H1 (cell line): ENCODE measurements at regions of chr16 and their contacts with region 1.

Region 1: DNA sequence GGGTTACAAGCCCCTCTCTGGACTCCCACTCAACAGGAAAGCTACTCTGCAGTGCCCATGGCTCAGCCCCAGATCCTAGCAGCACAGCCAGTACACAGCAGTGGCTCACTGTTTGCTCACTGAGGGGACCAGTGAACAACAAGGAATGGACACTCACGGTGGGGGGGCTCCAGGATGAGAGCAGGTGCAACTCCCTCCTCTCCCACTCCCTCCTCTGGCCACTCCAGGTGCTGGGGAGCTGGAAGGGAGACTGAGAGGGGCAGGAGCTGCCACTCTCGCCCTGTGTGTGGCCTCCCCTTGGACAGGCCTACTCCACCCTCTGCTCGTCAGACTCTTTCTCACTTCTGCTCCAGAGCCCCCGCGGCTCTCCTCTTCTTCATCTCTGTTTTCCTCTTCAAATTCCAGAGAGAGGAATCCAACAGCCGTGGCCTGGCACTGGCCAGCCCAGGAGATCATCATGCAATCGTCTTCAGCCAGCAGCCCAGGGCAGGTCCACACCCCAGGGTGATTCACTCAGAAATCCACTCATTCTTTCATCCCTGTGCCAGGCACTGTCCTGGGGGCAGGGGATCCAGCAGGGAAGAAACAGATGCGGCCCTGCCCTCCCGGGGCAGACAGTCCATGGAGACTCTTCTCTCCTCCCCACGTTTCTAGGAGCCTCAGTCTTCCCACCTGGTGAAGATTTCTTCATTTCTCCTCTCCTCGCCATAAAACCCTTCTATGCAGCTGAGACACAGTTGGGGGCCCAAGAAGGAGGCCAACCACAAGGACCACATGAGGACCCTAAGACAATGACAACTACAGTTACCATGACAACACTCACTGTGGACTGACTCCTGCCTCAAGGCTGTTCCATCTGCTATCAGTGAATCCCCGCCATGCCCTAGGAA is 30.7 kb downstream of the CFAP20 start:
- DNase-seq: no peak
- H3K4me3 ChIP-seq: no peak overlapping the region
- H3K27ac ChIP-seq: no peak overlapping the region
- H3K4me1 ChIP-seq: peaks cover 0 to 6% (median under 1%) of the 10 kb centered on the region in 4 experiments; a peak in 5 of 7 replicates
- H3K27me3 ChIP-seq: no peaks in the 10 kb centered on the region
- CTCF ChIP-seq: no peak
- EP300 ChIP-seq: no peak
- POLR2A ChIP-seq: no peak
- RAD21 ChIP-seq: no peak

Region 2: GRCh38 chr16:58025351-58026138 is 72.9 kb before region 1 on chr16 and contains the start of gene MMP15:
- CTCF ChIA-PET with region 1: interaction called, 37 read pairs
- POLR2A ChIA-PET with region 1: interaction called, 3 read pairs
- DNase-seq: peak; percentile 97 to 98
- H3K4me3 ChIP-seq: peak within 1 kb of the TSS; percentile 73 to 90 (median 82)
- H3K27ac ChIP-seq: no peak within 1 kb of the TSS
- H3K4me1 ChIP-seq: peaks cover 0 to 31% (median 20%) of the 10 kb centered on the region in 4 experiments; a peak in 6 of 7 replicates
- H3K27me3 ChIP-seq: no peaks in the 10 kb centered on the region; a peak in 3 of 7 replicates
- CTCF ChIP-seq: no peak
- EP300 ChIP-seq: no peak
- POLR2A ChIP-seq: no peak; a peak in 1 of 3 replicates
- RAD21 ChIP-seq: peak in 1 of 2 experiments; percentile 5; a peak in 1 of 4 replicates
- total RNA-seq, gene MMP15: 42.2 and 44.0 TPM in 2 replicates

Region 3: DNA sequence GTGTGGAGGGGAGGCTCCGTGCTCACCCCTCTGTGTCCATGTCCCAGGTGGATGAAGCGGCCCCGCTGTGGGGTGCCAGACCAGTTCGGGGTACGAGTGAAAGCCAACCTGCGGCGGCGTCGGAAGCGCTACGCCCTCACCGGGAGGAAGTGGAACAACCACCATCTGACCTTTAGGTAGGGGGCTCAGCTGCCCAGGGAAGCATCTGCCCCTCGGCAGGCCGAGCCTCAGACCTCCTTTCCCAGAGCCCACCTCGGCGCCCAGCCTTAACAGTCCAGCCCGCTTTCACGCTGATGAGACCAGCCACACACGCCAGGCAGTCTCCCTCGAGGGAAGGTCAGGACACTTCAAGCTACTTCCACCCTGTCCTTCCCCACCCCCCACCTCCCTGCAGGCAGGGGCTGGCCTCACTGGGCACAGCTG is 60.2 kb before region 1 on chr16:
- CTCF ChIA-PET with region 1: interaction called, 40 read pairs
- POLR2A ChIA-PET with region 1: no interaction called
- DNase-seq: no peak
- H3K4me3 ChIP-seq: no peak overlapping the region
- H3K27ac ChIP-seq: no peak overlapping the region
- H3K4me1 ChIP-seq: peaks cover 0 to 2% (median under 1%) of the 10 kb centered on the region in 4 experiments; a peak in 2 of 7 replicates
- H3K27me3 ChIP-seq: no peaks in the 10 kb centered on the region
- CTCF ChIP-seq: no peak
- EP300 ChIP-seq: no peak
- POLR2A ChIP-seq: no peak
- RAD21 ChIP-seq: no peak

Region 4: GRCh38 chr16:58054289-58054688 is 44.2 kb before region 1 on chr16:
- CTCF ChIA-PET with region 1: interaction called, 13 read pairs
- POLR2A ChIA-PET with region 1: interaction called, 3 read pairs
- DNase-seq: no peak
- H3K4me3 ChIP-seq: no peak overlapping the region
- H3K27ac ChIP-seq: no peak overlapping the region
- H3K4me1 ChIP-seq: peaks cover 0 to 4% (median 0%) of the 10 kb centered on the region in 4 experiments; a peak in 2 of 7 replicates
- H3K27me3 ChIP-seq: no peaks in the 10 kb centered on the region
- CTCF ChIP-seq: no peak
- EP300 ChIP-seq: no peak
- POLR2A ChIP-seq: no peak
- RAD21 ChIP-seq: no peak

Region 5: DNA sequence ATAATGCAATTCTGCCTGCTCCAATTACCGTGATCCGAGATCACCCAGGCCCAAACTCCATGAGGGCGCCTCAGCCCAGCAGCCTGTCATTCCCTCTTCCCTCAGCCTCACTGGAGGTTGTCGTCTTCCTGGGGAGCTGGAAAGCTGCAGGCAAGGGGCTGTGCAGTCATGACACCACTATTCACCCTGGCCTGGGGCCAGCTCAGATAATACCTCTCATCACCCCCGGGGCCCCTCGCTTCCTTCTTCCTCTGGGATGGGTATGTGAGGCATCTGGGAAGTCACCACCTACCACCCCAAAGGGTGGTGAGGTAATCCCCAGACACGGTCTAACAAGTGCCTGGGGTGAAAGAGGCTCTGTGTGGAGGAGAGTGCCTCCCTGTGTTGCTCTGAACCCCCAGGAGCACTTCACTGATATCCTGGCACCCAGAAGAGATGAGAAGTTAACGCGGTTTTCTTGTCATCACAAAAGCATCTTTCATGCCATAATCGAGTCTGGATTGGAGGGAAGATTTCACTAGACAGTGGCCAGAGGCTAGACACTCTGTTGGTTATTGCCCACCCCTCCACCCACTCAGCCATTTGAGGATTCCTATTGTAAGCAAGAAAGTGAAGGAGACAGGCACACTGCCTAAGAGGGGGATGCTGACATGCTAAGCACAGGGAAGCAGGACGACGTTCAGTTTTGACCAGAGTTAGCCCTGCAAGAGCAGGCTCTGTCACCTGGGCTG is 12.3 kb after region 1 on chr16:
- CTCF ChIA-PET with region 1: interaction called, 235 read pairs
- POLR2A ChIA-PET with region 1: interaction called, 5 read pairs
- DNase-seq: no peak
- H3K4me3 ChIP-seq: no peak overlapping the region
- H3K27ac ChIP-seq: no peak overlapping the region
- H3K4me1 ChIP-seq: peaks cover 9 to 24% (median 21%) of the 10 kb centered on the region in 4 experiments
- H3K27me3 ChIP-seq: no peaks in the 10 kb centered on the region
- CTCF ChIP-seq: no peak
- EP300 ChIP-seq: no peak
- POLR2A ChIP-seq: no peak
- RAD21 ChIP-seq: peak in 1 of 2 experiments; percentile 27; a peak in 1 of 4 replicates

Region 6: GRCh38 chr16:58148526-58148925 is 50.1 kb after region 1 on chr16:
- CTCF ChIA-PET with region 1: interaction called, 11 read pairs
- POLR2A ChIA-PET with region 1: no interaction called
- DNase-seq: no peak
- H3K4me3 ChIP-seq: no peak overlapping the region
- H3K27ac ChIP-seq: no peak overlapping the region
- H3K4me1 ChIP-seq: 0 out of 7 replicates have a peak, but pooled peaks cover 0 to 2% (median 0%) of the 10 kb centered on the region in 4 experiments
- H3K27me3 ChIP-seq: no peaks in the 10 kb centered on the region
- CTCF ChIP-seq: no peak
- EP300 ChIP-seq: no peak
- POLR2A ChIP-seq: no peak
- RAD21 ChIP-seq: no peak

Region 7: GRCh38 chr16:58236231-58236690 is 137.8 kb after region 1 on chr16:
- CTCF ChIA-PET with region 1: no interaction called
- POLR2A ChIA-PET with region 1: no interaction called
- DNase-seq: peak; percentile 73 to 90
- H3K4me3 ChIP-seq: peak overlapping the region; percentile 74 to 83 (median 78)
- H3K27ac ChIP-seq: no peak overlapping the region
- H3K4me1 ChIP-seq: peaks cover 0 to 6% (median 3%) of the 10 kb centered on the region in 4 experiments; a peak in 4 of 7 replicates
- H3K27me3 ChIP-seq: no peaks in the 10 kb centered on the region
- CTCF ChIP-seq: no peak
- EP300 ChIP-seq: no peak
- POLR2A ChIP-seq: peak in 1 of 2 experiments; percentile 55; a peak in 1 of 3 replicates
- RAD21 ChIP-seq: no peak